ENCODE measurements at regions of chr20 and their contacts with region 1.

Region 1: GRCh38 chr20:44651684-44652423 is at the start of gene ADA:
- DNase-seq: peak; percentile 65
- ATAC-seq: peak; percentile 52
- H3K4me3 ChIP-seq: peak within 1 kb of the TSS; percentile 67 to 89 (median 77)
- H3K4me3 Mint-ChIP-seq: peak within 1 kb of the TSS; percentile 88
- H3K27ac ChIP-seq: peak within 1 kb of the TSS in 1 of 2 donors; percentile 57
- H3K27ac Mint-ChIP-seq: peak within 1 kb of the TSS; percentile 84
- H3K4me1 ChIP-seq: peaks cover 26 to 36% of the 10 kb centered on the region in 2 donors
- H3K4me1 Mint-ChIP-seq: peaks cover 43% of the 10 kb centered on the region
- H3K27me3 ChIP-seq: no peaks in the 10 kb centered on the region
- H3K27me3 Mint-ChIP-seq: no peaks in the 10 kb centered on the region
- CTCF ChIP-seq: no peak
- total RNA-seq, gene ADA: 34.2 and 34.3 TPM in 2 replicates

Region 2: GRCh38 chr20:44475694-44476560 is 175.9 kb before region 1 on chr20 and contains the start of gene TTPAL:
- CTCF ChIA-PET with region 1: no interaction called
- POLR2A ChIA-PET with region 1: interaction called, 6 read pairs
- intact Hi-C with region 1: loop called (anchors 5 kb)
- DNase-seq: peak; percentile 93
- ATAC-seq: peak; percentile 94
- H3K4me3 ChIP-seq: peak within 1 kb of the TSS; percentile 70 to 99 (median 78)
- H3K4me3 Mint-ChIP-seq: peak within 1 kb of the TSS; percentile 97
- H3K27ac ChIP-seq: peak within 1 kb of the TSS; percentile 90 to 93
- H3K27ac Mint-ChIP-seq: peak within 1 kb of the TSS; percentile 95
- H3K4me1 ChIP-seq: peaks cover 23 to 34% of the 10 kb centered on the region in 2 donors
- H3K4me1 Mint-ChIP-seq: peaks cover 43% of the 10 kb centered on the region
- H3K27me3 ChIP-seq: no peaks in the 10 kb centered on the region
- H3K27me3 Mint-ChIP-seq: peaks cover 2% of the 10 kb centered on the region
- CTCF ChIP-seq: no peak
- total RNA-seq, gene TTPAL: 26.8 and 27.8 TPM in 2 replicates

Region 3: DNA sequence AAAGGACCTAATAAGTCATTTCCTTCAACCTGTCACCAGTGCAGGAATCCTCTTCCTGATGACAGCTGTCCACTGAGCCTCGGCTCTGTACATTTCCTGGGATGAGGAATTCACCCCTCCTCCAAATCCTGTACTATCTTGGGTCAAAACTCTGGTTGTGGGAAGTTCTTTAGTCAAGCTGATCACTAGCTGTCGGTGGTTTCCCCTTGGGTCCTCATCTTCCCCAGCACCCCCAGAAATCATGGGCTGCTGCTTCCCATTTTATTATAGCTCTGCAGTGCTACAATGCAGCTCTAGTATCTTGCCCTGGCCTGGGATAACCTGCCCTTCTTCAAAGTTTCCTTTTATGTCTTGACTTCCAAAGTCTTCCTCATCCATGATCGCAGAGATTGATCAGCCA is 14.2 kb after region 1 on chr20:
- CTCF ChIA-PET with region 1: no interaction called
- POLR2A ChIA-PET with region 1: interaction called, 4 read pairs
- intact Hi-C with region 1: loop called (anchors 2 kb)
- DNase-seq: no peak
- ATAC-seq: no peak
- H3K4me3 ChIP-seq: no peak overlapping the region
- H3K4me3 Mint-ChIP-seq: no peak overlapping the region
- H3K27ac ChIP-seq: no peak overlapping the region
- H3K27ac Mint-ChIP-seq: no peak overlapping the region
- H3K4me1 ChIP-seq: peaks cover 4% of the 10 kb centered on the region in 2 donors
- H3K4me1 Mint-ChIP-seq: peaks cover 7% of the 10 kb centered on the region
- H3K27me3 ChIP-seq: peaks cover 0 to 3% (median 0%) of the 10 kb centered on the region in 4 experiments
- H3K27me3 Mint-ChIP-seq: no peaks in the 10 kb centered on the region
- CTCF ChIP-seq: no peak

Measured in B cell (primary cell).